SK-N-SH (cell line): ENCODE measurements at regions of chr10 and their contacts with region 1.

Region 1: GRCh38 chr10:128211953-128212727 is 85.9 kb upstream of the MKI67 start:
- DNase-seq: peak; percentile 97
- H3K4me3 ChIP-seq: peak overlapping the region; percentile 42 to 57; a peak in 3 of 4 replicates
- H3K27ac ChIP-seq: no peak overlapping the region
- H3K4me1 ChIP-seq: peaks cover 0 to 9% of the 10 kb centered on the region in 2 experiments; a peak in 1 of 4 replicates
- H3K27me3 ChIP-seq: no peaks in the 10 kb centered on the region
- CTCF ChIP-seq: peak; percentile 78
- EP300 ChIP-seq: no peak
- RAD21 ChIP-seq: peak; percentile 61

Region 2: DNA sequence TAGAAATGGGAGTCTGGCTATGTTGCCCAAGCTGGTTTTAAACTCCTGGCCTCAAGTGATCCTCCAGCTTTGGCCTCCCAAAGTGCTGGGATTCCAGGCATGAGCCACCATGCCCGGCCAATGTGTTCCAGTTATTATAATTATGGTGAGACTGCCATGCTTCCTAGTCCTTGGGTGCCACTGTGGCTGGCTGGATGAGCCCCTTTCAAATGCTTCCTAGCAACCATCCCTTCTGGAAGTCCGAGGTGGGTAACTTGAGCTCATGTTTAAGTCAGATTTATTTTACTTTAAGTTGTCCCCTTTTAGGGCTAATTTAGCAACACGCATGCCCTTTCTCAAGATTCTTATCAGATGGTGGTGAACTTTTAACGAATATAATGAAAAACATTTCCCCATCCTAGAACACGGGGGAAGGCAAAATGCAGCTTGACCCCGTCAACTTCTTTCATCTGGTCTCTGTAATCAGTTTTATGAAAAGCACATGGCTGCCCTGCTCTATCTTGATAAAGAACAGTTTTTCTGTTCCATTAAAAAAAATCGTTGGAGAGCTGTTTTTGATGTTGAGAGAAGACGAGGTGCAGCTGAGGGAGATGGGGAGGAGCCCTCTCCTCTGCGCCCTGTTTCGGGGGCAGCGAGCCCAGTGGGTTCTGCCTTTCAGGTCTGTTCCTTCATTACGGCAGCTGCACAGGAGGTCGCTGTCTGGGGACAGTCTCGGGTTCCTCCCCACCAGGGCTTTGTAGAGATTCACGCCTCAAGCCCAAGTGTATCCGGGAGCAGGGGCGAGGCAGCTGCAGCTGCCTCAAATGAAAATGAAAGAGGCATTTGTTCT is 25.0 kb before region 1 on chr10:
- CTCF ChIA-PET with region 1: interaction called, 64 read pairs
- POLR2A ChIA-PET with region 1: interaction called, 4 read pairs
- DNase-seq: peak; percentile 78
- H3K4me3 ChIP-seq: peak overlapping the region in 1 of 2 experiments; percentile 22; a peak in 1 of 4 replicates
- H3K27ac ChIP-seq: peak overlapping the region in 1 of 2 experiments; percentile 98; a peak in 2 of 4 replicates
- H3K4me1 ChIP-seq: peaks cover 0 to 24% of the 10 kb centered on the region in 2 experiments; a peak in 2 of 4 replicates
- H3K27me3 ChIP-seq: no peaks in the 10 kb centered on the region
- CTCF ChIP-seq: no peak
- EP300 ChIP-seq: peak in 1 of 2 experiments; percentile 99; a peak in 2 of 4 replicates
- RAD21 ChIP-seq: 0 out of 2 replicates have a peak, but pooled peaks have one; percentile 14

Region 3: GRCh38 chr10:128237710-128238109 is 25.6 kb after region 1 on chr10:
- CTCF ChIA-PET with region 1: interaction called, 18 read pairs
- POLR2A ChIA-PET with region 1: interaction called, 3 read pairs
- DNase-seq: no peak
- H3K4me3 ChIP-seq: no peak overlapping the region
- H3K27ac ChIP-seq: no peak overlapping the region
- H3K4me1 ChIP-seq: peaks cover 0 to 2% of the 10 kb centered on the region in 2 experiments; a peak in 1 of 4 replicates
- H3K27me3 ChIP-seq: no peaks in the 10 kb centered on the region
- CTCF ChIP-seq: no peak
- EP300 ChIP-seq: no peak
- RAD21 ChIP-seq: no peak